Activated CD4-positive, alpha-beta memory T cell treated with anti-CD3 and anti-CD28 coated beads for 36 hours (primary cell): ENCODE measurements at regions of chr14 and their contacts with region 1.

Region 1: DNA sequence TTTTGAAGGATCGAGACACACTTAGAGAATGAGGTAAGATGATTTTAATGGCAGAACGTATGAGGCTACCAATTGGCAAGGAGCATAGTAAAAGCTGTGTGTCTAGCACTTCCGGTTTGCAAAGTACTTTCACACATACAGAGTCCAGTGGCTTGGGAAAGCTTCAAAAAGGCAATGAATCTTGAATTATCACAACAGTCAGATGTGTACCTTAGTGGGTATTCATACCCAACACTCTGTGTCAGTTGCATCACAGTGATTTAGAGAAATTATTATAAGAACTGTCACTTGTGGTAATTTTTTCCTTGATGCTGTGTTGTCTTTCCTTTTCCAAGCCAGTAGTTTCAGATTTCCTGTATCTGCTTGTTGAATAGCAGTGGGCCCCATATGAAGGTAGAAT is 424.1 kb downstream of the PCNX1 start:
- DNase-seq: no peak
- H3K4me3 Mint-ChIP-seq: no peak overlapping the region
- H3K27ac Mint-ChIP-seq: peak overlapping the region; percentile 44
- H3K4me1 Mint-ChIP-seq: peaks cover 59% of the 10 kb centered on the region
- H3K27me3 Mint-ChIP-seq: no peaks in the 10 kb centered on the region

Region 2: GRCh38 chr14:71497645-71498086 is 166.3 kb after region 1 on chr14:
- CTCF ChIA-PET with region 1: no interaction called
- POLR2A ChIA-PET with region 1: no interaction called
- intact Hi-C with region 1: loop called (anchors 5 kb)
- DNase-seq: no peak
- H3K4me3 Mint-ChIP-seq: no peak overlapping the region
- H3K27ac Mint-ChIP-seq: no peak overlapping the region
- H3K4me1 Mint-ChIP-seq: peaks cover 15% of the 10 kb centered on the region
- H3K27me3 Mint-ChIP-seq: no peaks in the 10 kb centered on the region